Gastrocnemius medialis (tissue), 4 donors: ENCODE measurements at regions of chr13 and their contacts with region 1.

Region 1: DNA sequence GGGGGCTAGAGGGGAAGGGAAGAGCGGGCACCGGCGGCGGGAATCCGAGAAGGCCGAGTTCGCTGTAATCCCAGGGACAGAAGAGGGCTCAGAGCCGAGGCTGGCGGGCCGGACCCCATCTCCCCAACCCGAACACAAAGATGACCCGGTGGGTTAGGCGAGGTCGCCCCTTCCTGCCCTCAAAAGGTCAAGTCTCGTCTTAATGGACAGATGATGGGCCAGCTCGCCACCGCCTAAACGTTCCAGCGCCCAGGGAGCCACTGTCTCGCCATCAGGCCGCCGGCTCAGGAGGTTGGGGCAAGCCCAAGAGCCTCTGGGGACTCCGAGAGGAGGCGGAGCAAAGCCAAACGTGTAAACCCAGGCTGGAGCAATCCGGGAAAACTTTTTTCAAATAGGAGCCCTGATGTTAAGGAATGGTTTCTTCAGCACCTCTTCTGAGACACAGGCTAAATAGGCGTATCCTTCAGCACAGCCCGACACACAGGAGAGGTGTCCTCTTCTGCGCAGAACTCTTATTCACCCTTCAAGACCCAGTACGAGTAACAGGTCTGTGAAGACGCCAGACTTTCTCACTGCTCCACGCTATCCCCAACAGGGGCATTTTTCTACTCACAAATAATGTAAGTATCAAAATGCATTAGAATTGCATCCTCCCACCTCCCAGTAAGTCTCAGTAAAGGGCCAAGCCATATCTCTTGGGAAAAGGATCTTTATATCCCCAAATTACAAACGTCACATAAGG is 6.3 kb upstream of the POU4F1 start:
- DNase-seq: no peak
- ATAC-seq: peak in 1 of 2 donors; percentile 39
- H3K4me3 ChIP-seq: peak overlapping the region; percentile 58 to 83 (median 60)
- H3K27ac ChIP-seq: no peak overlapping the region
- H3K4me1 ChIP-seq: peaks cover 0 to 11% of the 10 kb centered on the region in 2 donors
- H3K27me3 ChIP-seq: peaks cover 61 to 68% (median 65%) of the 10 kb centered on the region in 3 donors
- CTCF ChIP-seq: no peak
- POLR2A ChIP-seq: no peak

Region 2: GRCh38 chr13:78658635-78659449 is 49.2 kb after region 1 on chr13 and contains the start of gene OBI1:
- in situ Hi-C with region 1: no loop called
- intact Hi-C with region 1: loop called (anchors 5 kb)
- DNase-seq: peak; percentile 76 to 84
- ATAC-seq: peak; percentile 95
- H3K4me3 ChIP-seq: peak within 1 kb of the TSS; percentile 87 to 96 (median 94)
- H3K27ac ChIP-seq: peak within 1 kb of the TSS; percentile 80 to 86 (median 84)
- H3K4me1 ChIP-seq: peaks cover 15 to 25% of the 10 kb centered on the region in 2 donors
- H3K27me3 ChIP-seq: no peaks in the 10 kb centered on the region
- CTCF ChIP-seq: no peak
- POLR2A ChIP-seq: peak; percentile 34 to 50
- total RNA-seq, gene OBI1: 4.8 to 6.7 (median 5.8) TPM

Region 3: DNA sequence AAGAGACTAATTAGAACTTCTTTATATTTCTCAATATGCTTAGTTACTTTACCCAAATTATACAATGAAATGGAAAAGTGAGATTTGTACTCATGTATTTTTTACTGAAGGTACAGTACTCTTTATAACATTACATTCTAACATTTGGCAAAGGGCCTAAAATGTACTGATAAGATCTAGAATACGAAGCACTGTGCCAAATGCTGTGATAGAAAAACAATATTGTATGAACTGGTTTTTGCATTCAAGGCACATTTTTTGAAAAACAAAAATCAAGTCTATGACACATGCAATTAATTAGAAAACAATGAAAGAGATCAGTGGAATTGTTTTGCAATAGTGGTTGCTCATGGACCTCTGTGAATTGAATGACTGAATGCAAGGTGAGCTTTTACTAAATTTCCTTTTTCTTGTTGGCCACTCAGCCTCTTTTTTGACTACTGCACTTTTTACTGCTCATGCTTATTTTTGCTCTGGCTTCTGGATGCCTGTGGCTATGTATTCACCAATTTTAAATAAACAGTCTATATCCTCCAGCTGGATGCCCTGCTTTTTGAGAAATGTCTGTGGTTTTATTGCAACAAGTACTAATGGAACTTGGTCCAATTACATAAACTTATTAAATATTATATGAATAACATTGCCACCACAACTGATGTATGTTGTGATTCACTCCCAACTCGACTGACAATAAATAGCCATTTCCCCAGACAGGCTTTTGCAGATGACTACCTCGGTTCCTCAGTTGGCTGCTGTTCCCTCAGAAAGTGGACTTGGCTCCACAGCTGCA is 90.7 kb after region 1 on chr13:
- in situ Hi-C with region 1: no loop called
- intact Hi-C with region 1: no loop called
- DNase-seq: no peak
- ATAC-seq: no peak
- H3K4me3 ChIP-seq: no peak overlapping the region
- H3K27ac ChIP-seq: no peak overlapping the region
- H3K4me1 ChIP-seq: no peaks in the 10 kb centered on the region
- H3K27me3 ChIP-seq: no peaks in the 10 kb centered on the region
- CTCF ChIP-seq: no peak
- POLR2A ChIP-seq: no peak

Region 4: GRCh38 chr13:78759704-78760103 is 150.1 kb after region 1 on chr13:
- in situ Hi-C with region 1: no loop called
- intact Hi-C with region 1: no loop called
- DNase-seq: no peak
- ATAC-seq: no peak
- H3K4me3 ChIP-seq: no peak overlapping the region
- H3K27ac ChIP-seq: no peak overlapping the region
- H3K4me1 ChIP-seq: no peaks in the 10 kb centered on the region
- H3K27me3 ChIP-seq: no peaks in the 10 kb centered on the region
- CTCF ChIP-seq: no peak
- POLR2A ChIP-seq: no peak